ENCODE measurements at regions of chr2 and their contacts with region 1.

Region 1: DNA sequence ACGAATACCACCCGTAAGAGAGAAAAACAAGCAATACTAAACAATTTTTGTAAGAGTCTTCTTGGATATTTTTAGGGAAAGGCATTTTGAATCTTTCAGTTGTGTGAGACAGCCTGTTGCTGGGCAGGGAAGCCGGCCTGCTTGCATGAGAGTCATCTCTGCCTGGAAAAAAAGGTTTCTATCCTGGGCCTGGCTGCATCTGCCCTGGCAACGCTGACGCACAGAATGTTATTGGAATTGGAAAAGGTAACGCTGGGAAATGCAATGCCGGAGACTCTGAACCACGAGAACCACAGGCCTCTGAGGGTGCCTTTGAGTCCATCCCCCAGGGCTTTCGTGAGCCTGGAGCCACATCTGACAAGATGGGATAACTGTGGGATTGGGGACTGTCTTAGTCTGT is 17.9 kb upstream of the NPAS2 start:
- DNase-seq: no peak
- H3K4me3 Mint-ChIP-seq: no peak overlapping the region
- H3K27ac Mint-ChIP-seq: no peak overlapping the region
- H3K4me1 Mint-ChIP-seq: peaks cover 24% of the 10 kb centered on the region
- H3K27me3 Mint-ChIP-seq: no peaks in the 10 kb centered on the region
- CTCF ChIP-seq: no peak

Region 2: GRCh38 chr2:100845141-100845991 is 43.3 kb after region 1 on chr2:
- CTCF ChIA-PET with region 1: no interaction called
- intact Hi-C with region 1: no loop called
- DNase-seq: no peak
- H3K4me3 Mint-ChIP-seq: no peak overlapping the region
- H3K27ac Mint-ChIP-seq: peak overlapping the region; percentile 55
- H3K4me1 Mint-ChIP-seq: peaks cover 64% of the 10 kb centered on the region
- H3K27me3 Mint-ChIP-seq: no peaks in the 10 kb centered on the region
- CTCF ChIP-seq: no peak

Region 3: GRCh38 chr2:102350137-102350793 is 1548.2 kb after region 1 on chr2:
- CTCF ChIA-PET with region 1: interaction called, 10 read pairs
- intact Hi-C with region 1: no loop called
- DNase-seq: no peak
- H3K4me3 Mint-ChIP-seq: no peak overlapping the region
- H3K27ac Mint-ChIP-seq: no peak overlapping the region
- H3K4me1 Mint-ChIP-seq: no peaks in the 10 kb centered on the region
- H3K27me3 Mint-ChIP-seq: peaks cover 56% of the 10 kb centered on the region
- CTCF ChIP-seq: no peak

Measured in Calu3 (cell line).